ENCODE measurements at regions of chr1 and their contacts with region 1.

Region 1: GRCh38 chr1:173867753-173868265 is at the start of gene GAS5:
- DNase-seq: peak; percentile 99
- H3K4me3 ChIP-seq: peak within 1 kb of the TSS; percentile 98
- H3K27ac ChIP-seq: peak within 1 kb of the TSS; percentile 91
- H3K4me1 ChIP-seq: peaks cover 61% of the 10 kb centered on the region
- CTCF ChIP-seq: no peak
- total RNA-seq, gene GAS5: 899 and 1,026 TPM in 2 replicates

Region 2: GRCh38 chr1:173476664-173477285 is 391.0 kb before region 1 on chr1:
- CTCF ChIA-PET with region 1: no interaction called
- POLR2A ChIA-PET with region 1: interaction called, 4 read pairs
- intact Hi-C with region 1: loop called (anchors 5 kb)
- DNase-seq: peak; percentile 95
- H3K4me3 ChIP-seq: peak overlapping the region; percentile 99
- H3K27ac ChIP-seq: peak overlapping the region; percentile 63
- H3K4me1 ChIP-seq: peaks cover 30% of the 10 kb centered on the region
- CTCF ChIP-seq: no peak

Region 3: GRCh38 chr1:173802961-173803360 is 64.8 kb before region 1 on chr1:
- CTCF ChIA-PET with region 1: no interaction called
- POLR2A ChIA-PET with region 1: no interaction called
- intact Hi-C with region 1: no loop called
- DNase-seq: no peak
- H3K4me3 ChIP-seq: no peak overlapping the region
- H3K27ac ChIP-seq: no peak overlapping the region
- H3K4me1 ChIP-seq: no peaks in the 10 kb centered on the region
- CTCF ChIP-seq: no peak

Region 4: GRCh38 chr1:174022080-174022975 is 154.5 kb after region 1 on chr1 and contains the start of gene RC3H1:
- CTCF ChIA-PET with region 1: no interaction called
- POLR2A ChIA-PET with region 1: interaction called, 4 read pairs
- intact Hi-C with region 1: loop called (anchors 2 kb)
- DNase-seq: peak; percentile 91
- H3K4me3 ChIP-seq: peak within 1 kb of the TSS; percentile 89
- H3K27ac ChIP-seq: peak within 1 kb of the TSS; percentile 51
- H3K4me1 ChIP-seq: peaks cover 37% of the 10 kb centered on the region
- CTCF ChIP-seq: no peak
- total RNA-seq, gene RC3H1: 21.0 and 32.0 TPM in 2 replicates

Region 5: DNA sequence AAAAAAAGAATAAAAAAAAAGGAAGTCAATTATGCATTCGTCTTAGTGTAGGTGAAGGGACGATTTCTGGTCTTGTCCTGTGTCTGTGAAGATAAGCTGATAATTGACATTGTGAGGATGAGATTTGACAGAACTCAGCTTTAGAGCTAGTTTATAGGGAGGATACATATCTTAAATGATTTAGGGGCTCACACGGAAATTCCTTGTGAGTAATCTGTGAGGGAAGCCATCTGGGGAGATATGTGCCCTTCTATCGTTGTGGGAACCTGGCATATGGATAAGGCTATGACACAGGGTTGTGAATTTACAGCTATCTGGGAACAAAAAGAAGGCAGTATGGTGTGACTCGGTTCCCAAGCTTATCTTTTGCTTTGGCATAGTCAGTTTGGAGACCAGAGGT is 362.6 kb after region 1 on chr1:
- CTCF ChIA-PET with region 1: no interaction called
- POLR2A ChIA-PET with region 1: no interaction called
- intact Hi-C with region 1: no loop called
- DNase-seq: no peak
- H3K4me3 ChIP-seq: no peak overlapping the region
- H3K27ac ChIP-seq: no peak overlapping the region
- H3K4me1 ChIP-seq: no peaks in the 10 kb centered on the region
- CTCF ChIP-seq: no peak

Region 6: GRCh38 chr1:175530183-175530582 is 1662.4 kb after region 1 on chr1:
- CTCF ChIA-PET with region 1: no interaction called
- POLR2A ChIA-PET with region 1: no interaction called
- intact Hi-C with region 1: no loop called
- DNase-seq: no peak
- H3K4me3 ChIP-seq: no peak overlapping the region
- H3K27ac ChIP-seq: no peak overlapping the region
- H3K4me1 ChIP-seq: no peaks in the 10 kb centered on the region
- CTCF ChIP-seq: no peak

Measured in OCI-LY7 (cell line).